ENCODE measurements at regions of chr11 and their contacts with region 1.

Region 1: GRCh38 chr11:116505298-116506262 is 267.2 kb downstream of the BUD13 start:
- DNase-seq: peak; percentile 79
- H3K4me3 ChIP-seq: no peak overlapping the region
- H3K27ac ChIP-seq: peak overlapping the region in 1 of 2 experiments; percentile 97; a peak in 2 of 4 replicates
- H3K4me1 ChIP-seq: peaks cover 0 to 93% of the 10 kb centered on the region in 2 experiments; a peak in 2 of 4 replicates
- H3K27me3 ChIP-seq: peaks cover 23% of the 10 kb centered on the region; the same call in 1 of the 2 replicates
- CTCF ChIP-seq: no peak
- EP300 ChIP-seq: peak in 1 of 2 experiments; percentile 83; a peak in 2 of 4 replicates
- RAD21 ChIP-seq: peak; percentile 6; the same call in 1 of the 2 replicates

Region 2: DNA sequence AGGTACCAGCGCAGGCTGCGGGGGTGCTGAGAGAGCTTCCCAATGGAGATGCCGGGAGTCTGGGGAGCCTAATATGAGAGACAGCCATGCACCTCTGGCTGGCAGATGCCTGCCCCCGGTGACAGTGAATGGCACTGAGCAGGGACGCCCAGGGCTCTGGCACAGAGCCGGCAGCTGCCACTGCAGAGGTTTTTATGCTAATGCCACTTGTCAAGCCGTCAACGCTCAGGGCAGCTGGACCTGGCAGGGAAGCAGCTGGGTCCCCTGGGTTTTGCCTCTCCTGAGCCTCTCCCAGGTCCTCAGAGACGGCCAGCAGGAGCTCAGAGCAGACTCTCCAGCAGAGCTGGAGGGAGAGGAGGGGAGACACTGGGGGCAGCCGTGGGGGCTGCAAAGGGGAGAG is 306.4 kb before region 1 on chr11:
- CTCF ChIA-PET with region 1: no interaction called
- POLR2A ChIA-PET with region 1: interaction called, 10 read pairs
- DNase-seq: peak; percentile 87
- H3K4me3 ChIP-seq: no peak overlapping the region
- H3K27ac ChIP-seq: peak overlapping the region in 1 of 2 experiments; percentile 82; a peak in 2 of 4 replicates
- H3K4me1 ChIP-seq: peaks cover 0 to 47% of the 10 kb centered on the region in 2 experiments; a peak in 2 of 4 replicates
- H3K27me3 ChIP-seq: no peaks in the 10 kb centered on the region
- CTCF ChIP-seq: no peak
- EP300 ChIP-seq: peak in 1 of 2 experiments; percentile 94; a peak in 2 of 4 replicates
- RAD21 ChIP-seq: peak; percentile 34

Region 3: DNA sequence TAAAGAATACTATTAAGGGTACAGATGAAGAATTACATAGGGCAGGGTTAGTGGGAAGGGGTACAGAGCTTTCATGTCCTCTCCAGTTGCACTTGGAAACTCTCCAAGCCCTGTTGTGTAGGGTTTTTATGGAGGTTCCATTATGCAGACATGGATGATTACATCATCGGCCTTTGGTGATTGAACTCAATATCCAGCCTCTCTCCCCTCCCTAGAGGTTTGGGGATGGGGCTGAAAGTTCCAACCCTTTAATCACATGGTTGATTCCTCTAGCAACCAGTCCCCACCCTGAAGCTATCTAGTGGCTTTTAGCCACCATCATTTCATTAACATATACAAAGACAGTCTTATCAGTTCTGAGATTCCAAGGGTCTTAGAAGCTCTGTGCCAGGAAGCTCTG is 205.3 kb before region 1 on chr11:
- CTCF ChIA-PET with region 1: no interaction called
- POLR2A ChIA-PET with region 1: no interaction called
- DNase-seq: no peak
- H3K4me3 ChIP-seq: no peak overlapping the region
- H3K27ac ChIP-seq: no peak overlapping the region
- H3K4me1 ChIP-seq: no peaks in the 10 kb centered on the region; a peak in 1 of 4 replicates
- H3K27me3 ChIP-seq: no peaks in the 10 kb centered on the region; the same call in 1 of the 2 replicates
- CTCF ChIP-seq: no peak
- EP300 ChIP-seq: no peak
- RAD21 ChIP-seq: no peak

Region 4: GRCh38 chr11:116333001-116333616 is 172.5 kb before region 1 on chr11:
- CTCF ChIA-PET with region 1: no interaction called
- POLR2A ChIA-PET with region 1: no interaction called
- DNase-seq: no peak
- H3K4me3 ChIP-seq: no peak overlapping the region
- H3K27ac ChIP-seq: no peak overlapping the region
- H3K4me1 ChIP-seq: peaks cover 0 to 8% of the 10 kb centered on the region in 2 experiments; a peak in 1 of 4 replicates
- H3K27me3 ChIP-seq: no peaks in the 10 kb centered on the region
- CTCF ChIP-seq: no peak
- EP300 ChIP-seq: no peak
- RAD21 ChIP-seq: no peak

Region 5: GRCh38 chr11:116373104-116373944 is 132.3 kb before region 1 on chr11:
- CTCF ChIA-PET with region 1: interaction called, 22 read pairs
- POLR2A ChIA-PET with region 1: interaction called, 17 read pairs
- DNase-seq: no peak
- H3K4me3 ChIP-seq: no peak overlapping the region
- H3K27ac ChIP-seq: peak overlapping the region in 1 of 2 experiments; percentile 97; a peak in 2 of 4 replicates
- H3K4me1 ChIP-seq: peaks cover 0 to 47% of the 10 kb centered on the region in 2 experiments; a peak in 2 of 4 replicates
- H3K27me3 ChIP-seq: no peaks in the 10 kb centered on the region
- CTCF ChIP-seq: no peak
- EP300 ChIP-seq: no peak
- RAD21 ChIP-seq: no peak

Region 6: GRCh38 chr11:116420770-116421528 is 84.6 kb before region 1 on chr11:
- CTCF ChIA-PET with region 1: interaction called, 109 read pairs
- POLR2A ChIA-PET with region 1: interaction called, 237 read pairs
- DNase-seq: no peak
- H3K4me3 ChIP-seq: no peak overlapping the region
- H3K27ac ChIP-seq: peak overlapping the region in 1 of 2 experiments; percentile 100; a peak in 2 of 4 replicates
- H3K4me1 ChIP-seq: peaks cover 0 to 71% of the 10 kb centered on the region in 2 experiments; a peak in 2 of 4 replicates
- H3K27me3 ChIP-seq: no peaks in the 10 kb centered on the region
- CTCF ChIP-seq: no peak
- EP300 ChIP-seq: no peak
- RAD21 ChIP-seq: no peak

Region 7: DNA sequence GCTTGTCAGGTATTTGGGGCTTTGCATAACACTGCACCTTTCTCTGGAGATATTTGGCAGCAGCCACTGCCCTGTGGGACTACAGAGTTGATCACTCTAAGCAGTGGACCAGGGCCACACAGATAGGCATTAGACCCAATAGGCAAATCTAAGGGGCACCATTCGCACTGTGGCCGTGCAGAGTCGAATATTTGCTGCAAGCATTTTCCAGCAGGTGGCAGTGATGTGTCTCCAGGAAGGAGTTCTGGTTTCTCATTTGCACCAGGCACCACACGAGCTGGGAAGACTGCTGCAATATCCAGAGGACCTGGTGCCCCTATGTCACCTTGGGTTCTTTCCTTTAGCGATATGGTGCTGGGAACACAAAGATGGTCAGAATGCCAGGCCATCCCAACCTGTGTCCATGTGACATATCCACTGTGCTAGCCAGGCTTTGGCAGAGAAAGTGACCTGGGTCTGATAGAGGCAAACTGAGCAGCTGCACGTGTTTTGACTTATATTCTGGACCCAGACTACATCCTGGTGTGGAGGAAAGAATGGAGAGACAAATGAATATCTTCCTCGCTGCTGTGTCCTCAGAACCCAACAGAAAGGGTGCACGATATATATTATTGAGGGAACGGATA is 51.4 kb before region 1 on chr11:
- CTCF ChIA-PET with region 1: interaction called, 56 read pairs
- POLR2A ChIA-PET with region 1: interaction called, 31 read pairs
- DNase-seq: peak; percentile 37
- H3K4me3 ChIP-seq: no peak overlapping the region
- H3K27ac ChIP-seq: peak overlapping the region in 1 of 2 experiments; percentile 99; a peak in 2 of 4 replicates
- H3K4me1 ChIP-seq: peaks cover 0 to 46% of the 10 kb centered on the region in 2 experiments; a peak in 1 of 4 replicates
- H3K27me3 ChIP-seq: no peaks in the 10 kb centered on the region
- CTCF ChIP-seq: peak; percentile 62
- EP300 ChIP-seq: no peak
- RAD21 ChIP-seq: peak; percentile 80

Region 8: GRCh38 chr11:116517077-116517476 is 11.5 kb after region 1 on chr11:
- CTCF ChIA-PET with region 1: interaction called, 4 read pairs
- POLR2A ChIA-PET with region 1: interaction called, 13 read pairs
- DNase-seq: no peak
- H3K4me3 ChIP-seq: no peak overlapping the region
- H3K27ac ChIP-seq: peak overlapping the region in 1 of 2 experiments; percentile 70; a peak in 2 of 4 replicates
- H3K4me1 ChIP-seq: peaks cover 0 to 14% of the 10 kb centered on the region in 2 experiments; a peak in 1 of 4 replicates
- H3K27me3 ChIP-seq: no peaks in the 10 kb centered on the region
- CTCF ChIP-seq: no peak
- EP300 ChIP-seq: no peak
- RAD21 ChIP-seq: no peak

Measured in SK-N-SH (cell line).